ENCODE measurements at regions of chr2 and their contacts with region 1.

Region 1: DNA sequence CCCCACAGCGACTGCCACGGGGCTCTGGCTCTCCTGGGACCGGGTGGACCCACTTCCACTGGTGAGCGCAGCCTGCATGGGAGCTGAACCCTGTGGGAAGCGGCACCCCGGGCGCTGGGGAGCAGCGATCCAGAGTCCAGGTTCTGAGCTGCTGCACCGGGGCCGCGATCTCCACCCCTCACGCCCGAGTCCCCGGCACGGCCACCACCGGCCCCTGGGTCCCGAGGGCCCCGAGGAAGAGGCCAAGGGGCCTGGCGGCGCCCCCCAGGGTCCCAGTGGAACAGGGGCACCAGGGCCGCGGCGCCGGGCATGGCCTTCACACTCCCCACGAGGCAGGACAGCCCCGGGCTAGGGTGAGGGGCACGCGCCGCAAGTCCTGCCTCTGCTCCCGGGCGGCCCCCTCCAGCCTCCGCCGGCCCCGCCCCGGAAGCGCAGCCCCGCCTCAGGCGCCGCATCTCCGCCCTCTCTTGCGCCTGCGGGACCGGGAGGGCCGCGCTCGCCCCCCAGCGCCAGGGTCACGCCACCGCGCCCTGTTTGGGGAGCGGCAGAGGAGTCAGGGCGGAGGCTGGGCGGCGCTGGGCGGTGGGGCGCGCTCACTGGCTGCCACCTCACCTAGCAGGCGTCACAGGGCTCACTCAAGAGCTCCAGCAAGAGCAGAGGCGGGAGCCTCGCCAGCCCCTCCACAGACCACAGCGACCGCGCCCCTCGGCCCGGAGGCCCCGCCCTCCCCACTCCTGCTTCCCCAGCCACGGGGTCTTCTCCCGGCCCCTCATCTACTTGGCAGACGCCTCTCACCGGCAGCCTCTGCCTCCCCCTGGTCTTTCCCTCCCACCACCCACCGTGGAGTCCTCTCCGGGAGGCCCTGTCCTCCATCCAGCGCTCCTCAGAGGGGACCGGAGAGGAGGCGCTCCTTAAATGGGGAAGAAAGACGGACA is 26.8 kb downstream of the THAP4 start:
- DNase-seq: peak; percentile 94
- H3K4me3 Mint-ChIP-seq: peak overlapping the region; percentile 46
- H3K27ac Mint-ChIP-seq: no peak overlapping the region
- H3K4me1 Mint-ChIP-seq: peaks cover 14% of the 10 kb centered on the region
- H3K27me3 Mint-ChIP-seq: no peaks in the 10 kb centered on the region

Region 2: GRCh38 chr2:241508240-241509154 is 101.6 kb before region 1 on chr2 and contains the start of gene STK25:
- CTCF ChIA-PET with region 1: interaction called, 3 read pairs
- POLR2A ChIA-PET with region 1: no interaction called
- intact Hi-C with region 1: loop called (anchors 1 kb)
- DNase-seq: peak; percentile 98
- H3K4me3 Mint-ChIP-seq: peak within 1 kb of the TSS; percentile 79
- H3K27ac Mint-ChIP-seq: peak within 1 kb of the TSS; percentile 56
- H3K4me1 Mint-ChIP-seq: peaks cover 19% of the 10 kb centered on the region
- H3K27me3 Mint-ChIP-seq: no peaks in the 10 kb centered on the region
- total RNA-seq, gene STK25: 97.9 to 99.1 TPM

Region 3: GRCh38 chr2:241519669-241520068 is 90.5 kb before region 1 on chr2:
- CTCF ChIA-PET with region 1: no interaction called
- POLR2A ChIA-PET with region 1: no interaction called
- intact Hi-C with region 1: no loop called
- DNase-seq: no peak
- H3K4me3 Mint-ChIP-seq: no peak overlapping the region
- H3K27ac Mint-ChIP-seq: no peak overlapping the region
- H3K4me1 Mint-ChIP-seq: peaks cover 11% of the 10 kb centered on the region
- H3K27me3 Mint-ChIP-seq: peaks cover 4% of the 10 kb centered on the region

Region 4: DNA sequence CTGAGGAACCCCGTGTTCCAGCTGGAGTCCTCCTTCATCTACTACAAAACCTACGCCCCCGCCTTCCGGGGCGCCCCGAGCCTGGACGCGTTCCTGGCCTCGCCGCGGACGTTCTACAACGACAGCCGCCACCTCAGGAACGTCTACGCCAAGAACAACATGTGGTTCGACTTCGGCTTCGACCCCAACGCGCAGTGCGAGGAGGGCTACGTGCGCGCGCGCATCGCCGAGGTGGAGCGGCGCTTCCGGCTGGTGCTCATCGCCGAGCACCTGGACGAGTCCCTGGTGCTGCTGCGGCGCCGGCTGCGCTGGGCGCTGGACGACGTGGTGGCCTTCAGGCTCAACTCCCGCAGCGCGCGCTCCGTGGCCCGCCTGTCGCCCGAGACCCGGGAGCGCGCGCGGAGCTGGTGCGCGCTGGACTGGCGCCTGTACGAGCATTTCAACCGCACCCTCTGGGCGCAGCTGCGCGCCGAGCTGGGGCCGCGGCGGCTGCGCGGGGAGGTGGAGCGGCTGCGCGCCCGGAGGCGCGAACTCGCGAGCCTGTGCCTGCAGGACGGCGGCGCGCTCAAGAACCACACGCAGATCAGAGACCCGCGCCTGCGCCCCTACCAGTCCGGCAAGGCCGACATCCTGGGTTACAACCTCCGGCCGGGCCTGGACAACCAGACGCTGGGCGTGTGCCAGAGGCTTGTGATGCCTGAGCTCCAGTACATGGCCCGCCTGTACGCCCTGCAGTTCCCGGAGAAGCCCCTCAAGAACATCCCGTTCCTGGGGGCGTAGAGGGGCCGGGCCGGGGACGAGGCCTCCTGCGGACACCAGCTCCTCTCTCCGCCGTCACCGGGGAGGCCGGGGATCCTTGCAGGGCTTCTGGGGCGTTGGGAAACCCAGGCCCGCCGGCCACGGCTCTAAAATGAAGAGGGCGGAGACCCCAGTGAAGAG is 193.5 kb after region 1 on chr2:
- CTCF ChIA-PET with region 1: no interaction called
- POLR2A ChIA-PET with region 1: no interaction called
- intact Hi-C with region 1: no loop called
- DNase-seq: peak; percentile 58
- H3K4me3 Mint-ChIP-seq: peak overlapping the region; percentile 63
- H3K27ac Mint-ChIP-seq: no peak overlapping the region
- H3K4me1 Mint-ChIP-seq: peaks cover 9% of the 10 kb centered on the region
- H3K27me3 Mint-ChIP-seq: peaks cover 6% of the 10 kb centered on the region

Measured in activated CD4-positive, alpha-beta memory T cell treated with anti-CD3 and anti-CD28 coated beads for 36 hours (primary cell).